Cardiac septum (tissue), 1 donor: ENCODE measurements at regions of chr1 and their contacts with region 1.

Region 1: GRCh38 chr1:153572569-153573015 is 6.9 kb upstream of the S100A2 start:
- DNase-seq: peak; percentile 86

Region 2: GRCh38 chr1:153510984-153511410 is 61.6 kb before region 1 on chr1:
- intact Hi-C with region 1: loop called (anchors 1 kb)
- DNase-seq: peak; percentile 91

Region 3: DNA sequence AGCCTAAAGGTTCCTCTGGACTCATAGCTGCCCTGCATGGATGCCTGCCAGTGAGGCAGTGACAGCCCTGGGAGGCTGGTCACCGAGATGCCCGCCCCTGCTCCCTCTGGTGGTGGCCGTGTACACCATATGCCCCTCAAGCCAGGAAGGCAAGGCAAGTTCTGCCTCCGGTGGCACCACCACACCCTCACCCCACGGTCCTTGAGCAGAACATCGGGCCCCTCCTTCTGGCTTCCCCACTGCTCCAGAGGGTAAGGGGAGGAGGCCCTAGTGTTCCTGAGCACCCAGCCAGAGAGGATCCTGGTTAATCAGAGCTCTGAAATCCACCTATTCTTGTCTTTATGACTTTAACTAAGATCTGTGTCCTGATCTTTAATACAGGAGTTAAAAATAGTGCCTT is 45.1 kb after region 1 on chr1:
- intact Hi-C with region 1: loop called (anchors 2 kb)
- DNase-seq: no peak

Region 4: GRCh38 chr1:153774780-153775457 is 202.3 kb after region 1 on chr1 and contains the start of gene SLC27A3:
- intact Hi-C with region 1: loop called (anchors 5 kb)
- DNase-seq: peak; percentile 90
- total RNA-seq, gene SLC27A3: 9.8 TPM